Dendritic cell treated with granulocyte-macrophage colony-stimulating factor and Interleukin-4, amounts not matched to agents 40 ng/mL and 50 ng/mL, for 4 days (primary cell): ENCODE measurements at regions of chr17 and their contacts with region 1.

Region 1: GRCh38 chr17:58329035-58329809 is 627 bp upstream of the TSPOAP1 start:
- H3K4me3 Mint-ChIP-seq: peak overlapping the region; percentile 58
- H3K27ac Mint-ChIP-seq: peak overlapping the region; percentile 100
- H3K4me1 Mint-ChIP-seq: peaks cover 71% of the 10 kb centered on the region
- H3K27me3 Mint-ChIP-seq: peaks cover 22% of the 10 kb centered on the region

Region 2: GRCh38 chr17:58344047-58344790 is 15.0 kb after region 1 on chr17:
- intact Hi-C with region 1: loop called (anchors 2 kb)
- H3K4me3 Mint-ChIP-seq: peak overlapping the region; percentile 67
- H3K27ac Mint-ChIP-seq: peak overlapping the region; percentile 97
- H3K4me1 Mint-ChIP-seq: peaks cover 91% of the 10 kb centered on the region
- H3K27me3 Mint-ChIP-seq: no peaks in the 10 kb centered on the region

Region 3: DNA sequence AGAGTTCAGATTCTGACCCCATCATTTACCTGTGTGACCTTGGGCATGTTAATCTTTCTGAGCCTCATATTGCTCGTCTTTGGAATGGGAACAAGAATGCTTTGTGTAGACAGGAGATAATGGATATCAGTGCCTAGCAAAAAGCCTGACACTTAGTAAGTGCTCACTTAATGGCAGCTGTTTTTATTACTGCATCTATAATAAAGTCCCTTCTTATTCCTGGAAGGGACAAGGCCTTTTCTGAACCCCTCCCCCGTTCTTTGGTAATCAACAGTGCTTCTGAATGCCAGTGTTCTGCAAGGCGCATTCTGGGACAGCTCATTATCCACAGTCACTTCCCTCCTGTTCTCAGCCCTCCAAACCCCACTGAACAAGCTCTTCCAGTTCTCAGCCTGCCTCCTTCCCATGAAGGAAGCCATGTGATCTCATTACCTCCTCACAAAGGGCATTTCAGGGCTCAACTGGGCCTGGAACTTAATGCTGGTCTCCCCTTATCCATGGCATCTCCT is 47.9 kb after region 1 on chr17:
- intact Hi-C with region 1: loop called (anchors 10 kb)
- H3K4me3 Mint-ChIP-seq: no peak overlapping the region
- H3K27ac Mint-ChIP-seq: peak overlapping the region; percentile 23
- H3K4me1 Mint-ChIP-seq: peaks cover 42% of the 10 kb centered on the region
- H3K27me3 Mint-ChIP-seq: peaks cover 22% of the 10 kb centered on the region

Region 4: DNA sequence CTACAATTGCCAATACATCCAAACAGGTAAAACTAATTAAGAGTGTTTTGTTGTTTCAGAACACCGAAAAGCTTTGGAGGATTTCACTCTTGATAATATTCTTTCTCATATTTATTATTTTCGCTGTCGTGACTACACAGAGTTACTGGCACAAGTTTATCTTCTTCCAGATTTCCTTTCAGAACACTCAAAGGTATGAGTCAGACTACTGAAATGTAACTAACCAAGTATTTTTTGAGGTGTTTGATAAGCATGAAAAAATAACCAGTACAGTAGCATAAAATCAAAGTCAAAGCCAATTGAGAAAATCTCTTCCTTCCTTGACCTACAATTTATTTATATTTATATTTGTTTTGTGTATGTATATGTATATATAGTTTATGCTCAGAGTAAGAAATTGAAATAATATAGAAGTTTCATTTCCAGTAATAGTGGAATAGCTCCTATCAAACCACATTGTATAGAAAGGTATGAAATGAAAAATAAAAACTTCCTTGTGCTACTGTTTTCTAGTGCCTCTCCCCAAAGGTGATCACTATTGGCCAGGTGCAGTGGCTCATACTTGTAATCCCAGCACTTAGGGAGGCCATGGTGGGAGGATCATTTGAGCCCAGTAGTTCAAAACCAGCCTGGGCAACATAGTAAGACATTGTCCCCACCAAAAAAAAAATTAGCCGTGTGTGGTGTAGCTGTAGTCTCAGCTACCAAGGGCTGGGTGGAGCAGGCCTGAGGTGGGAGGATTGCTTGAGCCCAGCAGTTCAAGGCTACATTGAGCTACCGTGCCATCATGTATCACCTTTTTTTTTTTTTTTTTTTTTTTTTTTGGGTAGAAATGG is 374.1 kb after region 1 on chr17:
- intact Hi-C with region 1: no loop called
- H3K4me3 Mint-ChIP-seq: no peak overlapping the region
- H3K27ac Mint-ChIP-seq: no peak overlapping the region
- H3K4me1 Mint-ChIP-seq: peaks cover 11% of the 10 kb centered on the region
- H3K27me3 Mint-ChIP-seq: no peaks in the 10 kb centered on the region